OCI-LY7 (cell line): ENCODE measurements at regions of chr1 and their contacts with region 1.

Region 1: GRCh38 chr1:169694304-169695075 is 16.9 kb downstream of the SELL start:
- DNase-seq: peak; percentile 56
- H3K4me3 ChIP-seq: no peak overlapping the region
- H3K27ac ChIP-seq: peak overlapping the region; percentile 29
- H3K4me1 ChIP-seq: peaks cover 81% of the 10 kb centered on the region
- CTCF ChIP-seq: peak; percentile 72

Region 2: DNA sequence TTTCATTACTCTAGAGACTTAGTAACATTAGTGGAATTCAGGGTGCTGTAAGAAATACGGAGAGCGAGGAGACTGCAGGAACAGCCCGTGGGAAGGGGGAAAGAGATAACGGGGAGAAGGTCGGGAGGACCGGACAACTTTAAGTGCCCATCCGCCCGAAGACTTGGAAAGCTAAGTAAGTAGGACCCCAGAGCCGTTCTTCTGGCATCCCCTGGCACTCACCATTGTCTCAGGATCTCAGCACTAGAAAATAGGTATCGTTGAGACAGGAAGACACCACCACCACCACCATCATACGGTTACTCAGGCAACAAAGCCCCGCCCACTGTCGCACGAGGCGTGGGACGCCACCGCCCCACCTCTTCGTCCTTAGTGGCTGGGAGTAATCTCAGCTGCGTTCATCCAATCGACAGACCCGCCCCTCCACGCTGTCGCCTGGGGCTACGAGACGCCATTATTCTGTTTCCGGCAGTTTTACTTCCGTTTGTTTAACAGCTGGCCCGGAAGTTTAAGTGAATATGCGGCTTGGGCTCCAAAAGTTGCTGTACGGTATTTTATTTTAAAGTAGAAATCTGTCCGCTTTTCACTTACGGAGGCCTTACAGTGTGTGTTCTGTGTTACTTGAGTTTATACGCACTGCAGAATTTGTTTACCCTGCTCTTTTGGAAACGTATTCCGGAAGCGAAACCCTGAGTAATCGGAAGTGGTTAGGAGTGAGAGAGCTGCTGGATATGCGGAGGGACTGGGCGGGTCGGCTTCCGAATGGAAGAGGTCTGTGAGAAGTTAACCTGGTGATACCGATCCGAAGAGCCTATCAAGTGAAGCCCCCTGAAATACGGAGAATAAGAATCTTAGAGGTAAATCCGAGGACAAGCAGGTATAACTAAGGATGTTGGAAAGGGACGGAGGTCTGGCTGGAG is 326.7 kb before region 1 on chr1 and contains the starts of genes BLZF1 and NME7:
- CTCF ChIA-PET with region 1: no interaction called
- POLR2A ChIA-PET with region 1: interaction called, 4 read pairs
- intact Hi-C with region 1: loop called (anchors 10 kb)
- DNase-seq: peak; percentile 97
- H3K4me3 ChIP-seq: peak within 1 kb of the TSS; percentile 95
- H3K27ac ChIP-seq: peak within 1 kb of the TSS; percentile 74
- H3K4me1 ChIP-seq: peaks cover 20% of the 10 kb centered on the region
- CTCF ChIP-seq: no peak
- total RNA-seq, gene BLZF1: 4.9 and 7.1 TPM in 2 replicates
- total RNA-seq, gene NME7: 4.2 and 9.3 TPM in 2 replicates

Region 3: GRCh38 chr1:169485544-169486278 is 208.8 kb before region 1 on chr1 and contains the start of gene SLC19A2:
- CTCF ChIA-PET with region 1: no interaction called
- POLR2A ChIA-PET with region 1: no interaction called
- intact Hi-C with region 1: loop called (anchors 5 kb)
- DNase-seq: peak; percentile 96
- H3K4me3 ChIP-seq: peak within 1 kb of the TSS; percentile 76
- H3K27ac ChIP-seq: no peak within 1 kb of the TSS
- H3K4me1 ChIP-seq: peaks cover 10% of the 10 kb centered on the region
- CTCF ChIP-seq: peak; percentile 24
- total RNA-seq, gene SLC19A2: 3.2 TPM in 2 replicates

Region 4: GRCh38 chr1:169601093-169601881 is 93.2 kb before region 1 on chr1:
- CTCF ChIA-PET with region 1: interaction called, 3 read pairs
- POLR2A ChIA-PET with region 1: interaction called, 4 read pairs
- intact Hi-C with region 1: loop called (anchors 1 kb)
- DNase-seq: peak; percentile 43
- H3K4me3 ChIP-seq: no peak overlapping the region
- H3K27ac ChIP-seq: no peak overlapping the region
- H3K4me1 ChIP-seq: no peaks in the 10 kb centered on the region
- CTCF ChIP-seq: peak; percentile 78

Region 5: GRCh38 chr1:169680377-169681019 is 14.0 kb before region 1 on chr1:
- CTCF ChIA-PET with region 1: interaction called, 3 read pairs
- POLR2A ChIA-PET with region 1: interaction called, 31 read pairs
- intact Hi-C with region 1: no loop called
- DNase-seq: peak; percentile 67
- H3K4me3 ChIP-seq: peak overlapping the region; percentile 45
- H3K27ac ChIP-seq: peak overlapping the region; percentile 75
- H3K4me1 ChIP-seq: peaks cover 68% of the 10 kb centered on the region
- CTCF ChIP-seq: no peak

Region 6: GRCh38 chr1:169893494-169894362 is 199.2 kb after region 1 on chr1 and contains the start of gene SCYL3:
- CTCF ChIA-PET with region 1: no interaction called
- POLR2A ChIA-PET with region 1: interaction called, 4 read pairs
- intact Hi-C with region 1: loop called (anchors 5 kb)
- DNase-seq: peak; percentile 98
- H3K4me3 ChIP-seq: peak within 1 kb of the TSS; percentile 81
- H3K27ac ChIP-seq: peak within 1 kb of the TSS; percentile 64
- H3K4me1 ChIP-seq: peaks cover 27% of the 10 kb centered on the region
- CTCF ChIP-seq: no peak
- total RNA-seq, gene SCYL3: 5.9 and 7.3 TPM in 2 replicates

Region 7: DNA sequence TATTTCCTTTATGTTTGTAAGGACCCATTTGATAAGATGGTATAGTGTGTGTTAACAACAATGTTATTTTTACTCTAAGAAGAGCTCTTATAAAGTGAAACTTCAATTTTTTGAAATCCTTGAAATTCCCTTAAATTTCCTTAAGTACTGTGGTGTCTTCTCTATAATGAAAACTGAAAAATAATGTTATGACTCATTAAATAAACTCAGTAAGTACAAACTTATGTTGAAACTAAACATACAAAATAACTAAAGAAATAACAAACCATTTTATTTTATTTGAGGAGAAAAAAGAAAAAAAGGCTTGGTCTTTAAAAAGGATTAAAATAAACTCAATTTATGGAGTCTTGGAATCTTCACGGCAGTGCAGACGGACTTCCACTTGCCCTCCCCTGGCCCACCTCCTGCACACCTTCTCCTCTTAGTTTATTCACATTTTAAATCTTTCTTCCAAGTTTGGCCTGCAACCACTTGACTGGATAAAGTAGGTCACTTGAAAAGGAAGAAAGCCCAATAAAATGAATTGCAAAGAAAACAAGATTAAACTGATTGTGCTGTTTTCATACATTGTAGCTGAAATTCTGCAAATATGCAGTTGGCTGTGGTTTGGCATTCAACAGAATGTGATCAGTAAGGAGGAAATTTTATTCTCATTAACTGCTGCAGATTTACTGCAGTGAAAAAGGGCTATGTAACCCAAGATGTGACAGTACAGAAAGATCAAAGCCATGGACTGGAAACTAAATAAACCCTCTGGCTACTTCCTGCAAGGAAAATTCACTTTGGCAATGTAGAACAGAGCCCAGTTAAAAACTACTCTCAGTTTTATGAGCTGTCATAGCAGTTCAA is 247.7 kb after region 1 on chr1:
- CTCF ChIA-PET with region 1: no interaction called
- POLR2A ChIA-PET with region 1: no interaction called
- intact Hi-C with region 1: no loop called
- DNase-seq: no peak
- H3K4me3 ChIP-seq: no peak overlapping the region
- H3K27ac ChIP-seq: no peak overlapping the region
- H3K4me1 ChIP-seq: no peaks in the 10 kb centered on the region
- CTCF ChIP-seq: no peak